H1 (cell line): ENCODE measurements at regions of chr12 and their contacts with region 1.

Region 1: DNA sequence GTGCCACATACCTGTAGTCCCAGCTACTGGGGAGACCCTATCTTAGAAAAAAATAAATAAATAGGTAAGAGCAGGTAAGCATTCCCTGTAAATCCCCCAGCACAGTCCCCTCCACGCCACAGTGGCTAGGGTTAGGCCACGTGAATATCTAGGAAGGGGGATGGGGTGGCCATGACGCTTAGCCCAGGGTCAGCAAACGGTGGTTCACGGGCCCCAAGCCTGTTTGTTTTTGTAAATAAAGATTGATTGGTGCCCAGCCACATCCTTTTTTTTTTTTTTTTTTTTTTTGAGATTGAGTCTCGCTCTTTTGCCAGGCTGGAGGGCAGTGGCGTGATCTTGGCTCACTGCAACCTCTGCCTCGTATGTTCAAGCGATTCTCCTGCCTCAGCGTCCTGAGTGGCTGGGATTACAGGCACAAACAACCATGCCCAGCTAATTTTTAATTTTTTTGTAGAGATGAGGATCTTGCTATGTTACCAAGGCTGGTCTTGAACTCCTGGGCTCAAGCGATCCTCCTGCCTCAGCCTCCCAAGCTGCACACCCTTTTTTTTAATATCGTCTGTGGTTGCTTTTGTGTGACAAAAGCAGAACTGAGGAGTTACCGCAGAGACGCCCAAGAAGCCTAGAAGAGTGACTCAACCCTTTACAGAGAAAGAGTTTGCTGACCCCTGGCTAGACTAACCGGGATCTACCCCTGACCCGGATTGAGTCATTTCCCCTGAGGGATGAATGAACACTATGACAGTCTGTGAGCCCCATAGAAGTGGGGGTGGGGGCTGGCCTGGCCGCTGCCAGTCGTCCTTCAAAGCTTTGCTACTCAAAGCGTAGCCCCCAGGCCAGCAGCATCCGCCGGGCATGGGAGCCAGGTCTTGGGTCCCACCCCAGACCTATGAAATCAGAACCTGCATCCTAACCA is 113.7 kb upstream of the NCOR2 start:
- DNase-seq: peak in 1 of 2 experiments; percentile 49
- H3K4me3 ChIP-seq: no peak overlapping the region
- H3K27ac ChIP-seq: no peak overlapping the region
- H3K4me1 ChIP-seq: peaks cover 0 to 3% (median 2%) of the 10 kb centered on the region in 4 experiments; a peak in 3 of 7 replicates
- H3K27me3 ChIP-seq: no peaks in the 10 kb centered on the region; a peak in 1 of 7 replicates
- CTCF ChIP-seq: peak; percentile 31 to 55 (median 53)
- EP300 ChIP-seq: no peak
- POLR2A ChIP-seq: no peak
- RAD21 ChIP-seq: peak; percentile 62 to 79

Region 2: GRCh38 chr12:124566161-124566996 is 114.7 kb before region 1 on chr12:
- CTCF ChIA-PET with region 1: interaction called, 18 read pairs
- POLR2A ChIA-PET with region 1: no interaction called
- DNase-seq: peak in 1 of 2 experiments; percentile 85
- H3K4me3 ChIP-seq: peak overlapping the region; percentile 77 to 86 (median 78)
- H3K27ac ChIP-seq: peak overlapping the region; percentile 83; the same call in 1 of the 2 replicates
- H3K4me1 ChIP-seq: peaks cover 22 to 36% (median 31%) of the 10 kb centered on the region in 4 experiments
- H3K27me3 ChIP-seq: no peaks in the 10 kb centered on the region
- CTCF ChIP-seq: no peak
- EP300 ChIP-seq: no peak
- POLR2A ChIP-seq: peak in 1 of 2 experiments; percentile 28; a peak in 1 of 3 replicates
- RAD21 ChIP-seq: no peak

Region 3: GRCh38 chr12:124716208-124717161 is 35.4 kb after region 1 on chr12:
- CTCF ChIA-PET with region 1: no interaction called
- POLR2A ChIA-PET with region 1: no interaction called
- DNase-seq: no peak
- H3K4me3 ChIP-seq: no peak overlapping the region
- H3K27ac ChIP-seq: no peak overlapping the region
- H3K4me1 ChIP-seq: peaks cover 0 to 3% (median 2%) of the 10 kb centered on the region in 4 experiments; a peak in 4 of 7 replicates
- H3K27me3 ChIP-seq: no peaks in the 10 kb centered on the region
- CTCF ChIP-seq: peak in 1 of 3 experiments; percentile 21; a peak in 1 of 4 replicates
- EP300 ChIP-seq: no peak
- POLR2A ChIP-seq: no peak
- RAD21 ChIP-seq: peak; percentile 44 to 60